ENCODE measurements at regions of chr7 and their contacts with region 1.

Region 1: DNA sequence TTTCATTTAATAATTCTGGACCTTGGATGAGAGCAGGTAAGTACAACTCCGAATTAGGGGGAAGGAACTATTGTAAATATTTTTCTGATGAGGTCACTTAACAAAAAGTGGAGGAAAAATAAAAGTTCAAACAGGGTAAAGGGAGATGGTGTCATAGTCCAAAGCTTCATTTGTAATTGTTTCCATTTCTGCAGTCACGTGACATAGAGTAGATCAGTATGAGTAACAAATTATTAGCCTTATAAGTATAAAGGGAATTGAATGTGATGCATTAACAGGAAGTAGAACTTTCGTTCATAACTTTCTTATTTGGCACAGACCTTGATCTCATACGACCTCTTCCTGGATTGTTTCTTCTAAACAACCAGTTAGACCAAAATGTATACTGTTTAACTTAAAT is 347.2 kb upstream of the TPK1 start:
- DNase-seq: no peak
- ATAC-seq: no peak
- H3K4me3 ChIP-seq: no peak overlapping the region
- H3K27ac ChIP-seq: no peak overlapping the region
- H3K4me1 ChIP-seq: no peaks in the 10 kb centered on the region
- H3K27me3 ChIP-seq: no peaks in the 10 kb centered on the region

Region 2: GRCh38 chr7:145082366-145083161 is 100.5 kb before region 1 on chr7:
- intact Hi-C with region 1: no loop called
- DNase-seq: no peak
- ATAC-seq: no peak
- H3K4me3 ChIP-seq: no peak overlapping the region
- H3K27ac ChIP-seq: no peak overlapping the region
- H3K4me1 ChIP-seq: no peaks in the 10 kb centered on the region
- H3K27me3 ChIP-seq: no peaks in the 10 kb centered on the region

Region 3: GRCh38 chr7:145156837-145157236 is 26.2 kb before region 1 on chr7:
- intact Hi-C with region 1: loop called in 1 of 2 experiments (anchors 2 kb)
- DNase-seq: no peak
- ATAC-seq: no peak
- H3K4me3 ChIP-seq: no peak overlapping the region
- H3K27ac ChIP-seq: no peak overlapping the region
- H3K4me1 ChIP-seq: no peaks in the 10 kb centered on the region
- H3K27me3 ChIP-seq: no peaks in the 10 kb centered on the region